ENCODE measurements at regions of chr1 and their contacts with region 1.

Region 1: DNA sequence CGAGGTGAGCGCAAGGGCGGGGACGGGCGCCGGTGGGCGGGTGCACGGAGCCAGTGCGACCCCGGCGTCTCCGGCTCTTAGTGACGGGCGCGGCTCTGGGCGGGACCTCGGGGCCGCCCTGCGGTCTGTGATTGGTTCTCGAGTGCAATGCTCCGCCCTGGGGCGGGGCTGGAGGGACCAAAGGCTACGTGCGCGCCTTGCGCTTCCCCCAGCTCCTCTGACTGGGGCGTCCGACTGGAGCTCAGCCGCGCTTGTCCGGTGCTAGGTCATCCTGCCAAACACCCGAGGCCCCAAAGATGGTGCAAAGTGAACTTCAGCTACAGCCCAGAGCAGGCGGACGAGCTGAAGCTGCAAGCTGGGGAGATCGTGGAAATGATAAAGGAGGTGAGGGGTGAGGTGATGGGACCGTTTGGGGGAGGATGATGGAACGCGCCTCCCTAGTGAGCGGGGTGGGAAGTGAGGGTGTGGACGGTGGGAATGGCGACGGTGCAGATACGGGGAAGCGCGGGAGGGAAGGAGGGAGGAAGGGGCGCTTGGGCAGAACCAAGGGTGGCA is 811 bp downstream of the SH3D21 start:
- DNase-seq: peak; percentile 84 to 96 (median 93)
- ATAC-seq: peak; percentile 98
- H3K4me3 ChIP-seq: peak overlapping the region; percentile 58 to 63
- H3K4me3 Mint-ChIP-seq: peak overlapping the region; percentile 96
- H3K27ac ChIP-seq: peak overlapping the region; percentile 63
- H3K27ac Mint-ChIP-seq: peak overlapping the region; percentile 94
- H3K4me1 ChIP-seq: peaks cover 13% of the 10 kb centered on the region
- H3K4me1 Mint-ChIP-seq: peaks cover 7% of the 10 kb centered on the region
- H3K27me3 ChIP-seq: no peaks in the 10 kb centered on the region
- H3K27me3 Mint-ChIP-seq: no peaks in the 10 kb centered on the region
- CTCF ChIP-seq: no peak

Region 2: DNA sequence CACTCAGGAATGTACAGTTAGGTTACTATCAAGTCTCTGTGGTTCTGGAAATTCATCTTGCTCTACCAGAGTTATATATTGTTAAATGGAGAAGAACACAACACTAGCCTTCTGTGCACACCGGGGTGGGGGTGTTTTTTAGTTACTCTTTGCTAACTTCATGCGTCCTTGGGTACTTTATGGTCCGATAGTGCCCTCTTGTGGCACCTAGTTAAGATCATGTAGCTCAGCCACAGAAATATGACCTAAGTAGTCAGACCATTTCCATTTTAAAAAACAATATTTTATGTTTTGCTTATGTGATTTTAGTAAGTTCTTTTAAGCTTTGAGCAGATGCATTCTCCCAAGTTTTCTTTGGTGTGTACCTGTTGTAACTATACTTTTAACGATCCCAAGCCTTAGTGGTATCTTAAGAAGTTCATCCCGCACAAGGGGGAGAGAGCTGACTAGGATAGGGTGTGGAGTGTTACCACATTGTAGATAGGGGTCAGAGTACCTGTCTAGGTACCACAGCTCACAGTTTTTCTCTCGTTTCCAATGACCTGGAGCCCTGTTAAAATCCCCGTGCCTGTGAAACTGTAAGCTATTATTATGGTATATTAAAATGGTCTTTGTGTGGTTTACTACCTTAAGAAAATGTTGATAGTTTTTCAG is 21.4 kb before region 1 on chr1:
- CTCF ChIA-PET with region 1: interaction called, 10 read pairs
- POLR2A ChIA-PET with region 1: interaction called, 4 read pairs
- intact Hi-C with region 1: no loop called
- DNase-seq: peak; percentile 32 to 91 (median 65)
- ATAC-seq: peak; percentile 98
- H3K4me3 ChIP-seq: no peak overlapping the region
- H3K4me3 Mint-ChIP-seq: no peak overlapping the region
- H3K27ac ChIP-seq: no peak overlapping the region
- H3K27ac Mint-ChIP-seq: peak overlapping the region; percentile 9
- H3K4me1 ChIP-seq: peaks cover 4% of the 10 kb centered on the region
- H3K4me1 Mint-ChIP-seq: peaks cover 11% of the 10 kb centered on the region
- H3K27me3 ChIP-seq: no peaks in the 10 kb centered on the region
- H3K27me3 Mint-ChIP-seq: no peaks in the 10 kb centered on the region
- CTCF ChIP-seq: peak; percentile 68

Region 3: DNA sequence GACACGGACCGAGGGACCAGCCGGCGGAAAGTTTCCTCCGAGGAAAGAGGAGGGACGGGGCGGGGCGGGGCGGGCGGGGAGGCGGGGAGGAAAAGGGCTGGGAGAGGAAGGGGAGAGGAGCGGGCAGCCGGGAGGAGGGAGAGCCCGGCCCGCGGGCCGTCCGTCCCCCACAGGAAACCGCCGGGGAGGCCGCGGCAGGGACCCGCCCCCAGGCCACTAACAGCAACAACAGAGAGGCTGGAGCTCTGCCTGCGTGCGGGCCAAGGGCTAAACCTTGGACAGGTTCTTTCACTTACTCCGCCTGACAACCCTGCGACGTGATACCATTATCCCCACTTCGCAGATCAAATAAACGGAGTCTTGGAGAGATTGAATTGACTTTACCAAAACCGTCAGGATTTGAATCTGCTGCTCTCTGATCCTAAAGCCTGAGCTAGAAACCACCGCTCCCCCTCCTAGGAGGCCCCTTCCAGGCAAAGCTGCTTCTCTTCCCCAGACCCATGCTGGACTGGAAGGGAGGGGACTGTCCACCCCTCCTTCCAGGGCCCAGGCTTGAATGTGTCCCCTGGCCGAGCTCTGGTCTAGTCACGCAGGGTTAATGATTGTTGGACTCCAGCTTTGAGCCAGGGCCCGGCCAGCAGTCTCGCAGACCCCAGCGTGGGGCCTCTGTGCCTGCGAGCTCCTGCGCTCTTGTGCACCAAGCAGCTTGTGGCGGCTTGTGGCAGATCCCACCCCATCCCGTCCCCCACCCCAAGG is 16.8 kb after region 1 on chr1 and contains the start of gene EVA1B:
- CTCF ChIA-PET with region 1: no interaction called
- POLR2A ChIA-PET with region 1: interaction called, 8 read pairs
- intact Hi-C with region 1: loop called in 1 of 2 experiments (anchors 1 kb)
- DNase-seq: peak in 8 of 9 experiments; percentile 26 to 64 (median 48)
- ATAC-seq: peak; percentile 37
- H3K4me3 ChIP-seq: peak within 1 kb of the TSS; percentile 58 to 62
- H3K4me3 Mint-ChIP-seq: peak within 1 kb of the TSS; percentile 80
- H3K27ac ChIP-seq: no peak within 1 kb of the TSS
- H3K27ac Mint-ChIP-seq: peak within 1 kb of the TSS; percentile 55
- H3K4me1 ChIP-seq: peaks cover 25% of the 10 kb centered on the region
- H3K4me1 Mint-ChIP-seq: peaks cover 25% of the 10 kb centered on the region
- H3K27me3 ChIP-seq: no peaks in the 10 kb centered on the region
- H3K27me3 Mint-ChIP-seq: peaks cover 9% of the 10 kb centered on the region
- CTCF ChIP-seq: no peak
- total RNA-seq, gene EVA1B: 0.97 to 1.2 TPM

Region 4: DNA sequence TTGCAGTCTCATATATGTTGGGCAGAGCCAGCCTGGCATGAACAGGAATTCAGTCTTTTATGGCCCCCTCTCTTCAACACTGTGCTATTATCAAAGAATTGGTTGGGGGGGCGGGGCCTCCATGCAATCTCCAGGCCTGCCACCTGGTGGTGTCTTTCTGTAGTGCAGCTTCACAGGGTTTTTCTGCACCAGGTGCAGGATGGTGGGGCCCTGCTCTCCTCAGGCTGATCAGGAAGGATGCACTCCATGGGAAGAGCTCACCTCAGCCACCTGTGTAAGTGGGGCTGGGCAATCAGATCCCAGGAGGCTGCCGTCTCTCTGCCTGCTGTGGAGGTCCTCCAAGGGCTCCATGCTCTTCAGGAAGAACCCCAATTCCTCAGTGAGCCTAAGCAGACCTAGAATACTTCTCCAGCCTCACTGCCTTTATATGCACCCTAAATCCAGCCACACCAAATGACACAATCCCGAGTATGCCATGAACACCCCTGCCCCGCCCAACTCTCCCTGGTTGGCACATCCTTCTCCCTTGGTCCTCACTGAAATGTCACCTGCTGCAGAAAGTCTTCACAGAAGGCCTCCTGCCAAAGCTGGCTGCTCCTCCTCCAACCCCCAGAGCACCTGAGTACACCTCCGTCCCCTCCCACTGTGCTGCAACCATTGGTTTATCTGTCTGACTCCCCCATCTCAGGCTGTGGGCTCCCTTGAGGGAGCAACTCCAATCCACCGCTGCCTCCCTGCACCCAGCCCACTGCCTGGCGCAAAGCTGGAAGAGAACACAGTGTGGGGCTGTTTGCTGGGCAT is 62.3 kb after region 1 on chr1:
- CTCF ChIA-PET with region 1: interaction called, 9 read pairs
- POLR2A ChIA-PET with region 1: interaction called, 14 read pairs
- intact Hi-C with region 1: loop called (anchors 1 to 2 kb)
- DNase-seq: peak; percentile 75 to 91 (median 85)
- ATAC-seq: peak; percentile 62
- H3K4me3 ChIP-seq: no peak overlapping the region
- H3K4me3 Mint-ChIP-seq: no peak overlapping the region
- H3K27ac ChIP-seq: peak overlapping the region in 1 of 2 experiments; percentile 25
- H3K27ac Mint-ChIP-seq: peak overlapping the region; percentile 79
- H3K4me1 ChIP-seq: peaks cover 55% of the 10 kb centered on the region
- H3K4me1 Mint-ChIP-seq: peaks cover 68% of the 10 kb centered on the region
- H3K27me3 ChIP-seq: no peaks in the 10 kb centered on the region
- H3K27me3 Mint-ChIP-seq: no peaks in the 10 kb centered on the region
- CTCF ChIP-seq: peak; percentile 88

Region 5: DNA sequence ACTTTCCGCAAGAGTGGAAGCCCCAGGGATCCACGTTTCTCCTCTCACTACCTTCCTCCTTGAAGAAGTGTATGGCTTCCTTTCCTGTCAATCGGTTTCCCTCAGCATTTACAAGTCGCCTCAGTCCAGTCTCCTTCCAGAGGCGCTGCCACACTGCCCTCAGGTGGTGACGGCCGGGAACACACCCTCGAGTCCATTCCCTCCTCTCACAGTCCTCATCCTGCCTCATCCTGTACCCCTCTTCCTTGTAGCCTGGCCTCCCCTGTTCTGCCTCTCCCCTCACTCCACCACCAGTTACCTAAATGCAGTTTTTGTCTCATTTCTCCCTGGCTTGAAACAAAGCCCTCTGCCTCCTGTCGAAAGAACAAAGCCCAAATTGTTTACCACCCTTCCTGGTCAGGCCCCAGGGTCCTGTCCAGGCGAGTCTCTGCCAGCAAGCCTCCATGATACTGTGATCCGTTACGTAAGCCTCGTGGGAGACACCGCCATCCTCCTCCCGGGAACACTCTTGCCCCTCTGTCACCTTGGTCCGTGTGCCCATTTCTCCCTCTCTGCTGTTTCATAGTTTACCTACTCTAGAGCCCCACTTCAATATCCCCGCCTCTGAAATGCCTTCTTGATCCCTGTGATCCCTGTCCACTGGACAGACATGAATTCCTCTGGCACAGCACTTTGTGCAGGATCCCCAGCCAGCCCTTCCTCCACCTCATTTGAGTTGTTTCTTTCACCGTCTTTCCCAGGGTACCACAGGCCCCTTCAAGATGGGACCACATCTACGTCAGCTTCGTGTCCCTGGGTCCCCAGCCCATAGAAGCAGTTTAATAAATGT is 114.1 kb after region 1 on chr1:
- CTCF ChIA-PET with region 1: no interaction called
- POLR2A ChIA-PET with region 1: no interaction called
- intact Hi-C with region 1: loop called in 1 of 2 experiments (anchors 1 kb)
- DNase-seq: peak; percentile 82 to 96 (median 89)
- ATAC-seq: peak; percentile 100
- H3K4me3 ChIP-seq: peak overlapping the region in 1 of 2 experiments; percentile 7
- H3K4me3 Mint-ChIP-seq: peak overlapping the region; percentile 64
- H3K27ac ChIP-seq: peak overlapping the region in 1 of 2 experiments; percentile 60
- H3K27ac Mint-ChIP-seq: peak overlapping the region; percentile 88
- H3K4me1 ChIP-seq: peaks cover 18% of the 10 kb centered on the region
- H3K4me1 Mint-ChIP-seq: peaks cover 23% of the 10 kb centered on the region
- H3K27me3 ChIP-seq: no peaks in the 10 kb centered on the region
- H3K27me3 Mint-ChIP-seq: no peaks in the 10 kb centered on the region
- CTCF ChIP-seq: peak; percentile 87

Region 6: DNA sequence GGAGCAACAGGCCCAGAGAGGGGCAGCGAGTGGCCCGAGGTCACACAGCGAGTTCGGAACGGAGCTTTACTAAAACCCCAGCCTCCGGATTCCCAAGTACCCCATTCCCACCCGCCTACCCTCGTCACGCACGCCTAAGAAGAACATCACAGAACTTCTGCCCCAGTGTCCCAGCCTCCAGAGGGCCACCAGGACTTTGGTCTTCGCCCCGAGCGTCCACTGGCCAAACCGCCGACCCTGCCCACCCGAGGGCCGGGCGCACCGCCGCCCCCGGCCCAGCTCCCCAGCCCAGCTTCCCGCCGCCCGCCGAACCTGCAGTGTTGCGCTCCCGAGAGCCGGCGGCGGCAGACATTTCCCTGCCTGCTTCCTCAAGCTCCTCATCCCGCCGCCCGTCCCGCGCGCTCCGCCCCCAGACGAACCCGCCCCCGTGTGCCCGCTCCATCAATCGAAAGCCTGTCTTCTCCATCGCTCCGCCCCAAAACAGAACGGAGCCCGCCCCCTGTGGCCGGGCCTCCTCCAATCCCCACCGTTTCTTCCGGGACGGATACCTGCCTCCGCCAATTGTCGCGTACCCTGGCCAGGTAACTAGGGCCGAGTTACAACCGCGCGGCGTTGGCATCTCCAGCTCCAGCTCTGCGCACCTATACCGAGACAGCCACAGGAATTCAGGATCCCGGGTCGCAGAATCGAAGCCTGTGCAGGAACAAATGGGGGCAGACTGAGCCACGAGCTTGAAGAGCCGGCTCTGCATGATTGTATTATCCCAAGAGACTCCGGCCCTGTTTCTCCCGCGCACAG is 1624.6 kb after region 1 on chr1:
- CTCF ChIA-PET with region 1: no interaction called
- POLR2A ChIA-PET with region 1: no interaction called
- intact Hi-C with region 1: loop called in 1 of 2 experiments (anchors 10 kb)
- DNase-seq: peak; percentile 96 to 98 (median 97)
- ATAC-seq: peak; percentile 98
- H3K4me3 ChIP-seq: peak overlapping the region; percentile 79 to 89
- H3K4me3 Mint-ChIP-seq: peak overlapping the region; percentile 100
- H3K27ac ChIP-seq: peak overlapping the region; percentile 40 to 66
- H3K27ac Mint-ChIP-seq: peak overlapping the region; percentile 89
- H3K4me1 ChIP-seq: peaks cover 26% of the 10 kb centered on the region
- H3K4me1 Mint-ChIP-seq: peaks cover 40% of the 10 kb centered on the region
- H3K27me3 ChIP-seq: no peaks in the 10 kb centered on the region
- H3K27me3 Mint-ChIP-seq: no peaks in the 10 kb centered on the region
- CTCF ChIP-seq: no peak

Measured in CD8-positive, alpha-beta T cell (primary cell).